Left ventricle myocardium inferior (tissue), 1 donor: ENCODE measurements at regions of chr1 and their contacts with region 1.

Region 1: GRCh38 chr1:227946624-227947385 is 927 bp downstream of the WNT9A start:
- DNase-seq: peak; percentile 78
- H3K4me3 ChIP-seq: peak overlapping the region; percentile 73
- H3K27ac ChIP-seq: peak overlapping the region; percentile 79
- H3K4me1 ChIP-seq: peaks cover 68% of the 10 kb centered on the region
- H3K27me3 ChIP-seq: peaks cover 6% of the 10 kb centered on the region
- CTCF ChIP-seq: peak; percentile 87

Region 2: GRCh38 chr1:227482023-227482299 is 464.8 kb before region 1 on chr1:
- intact Hi-C with region 1: loop called (anchors 5 kb)
- DNase-seq: no peak
- H3K4me3 ChIP-seq: no peak overlapping the region
- H3K27ac ChIP-seq: no peak overlapping the region
- H3K4me1 ChIP-seq: no peaks in the 10 kb centered on the region
- H3K27me3 ChIP-seq: peaks cover 22% of the 10 kb centered on the region
- CTCF ChIP-seq: no peak

Region 3: DNA sequence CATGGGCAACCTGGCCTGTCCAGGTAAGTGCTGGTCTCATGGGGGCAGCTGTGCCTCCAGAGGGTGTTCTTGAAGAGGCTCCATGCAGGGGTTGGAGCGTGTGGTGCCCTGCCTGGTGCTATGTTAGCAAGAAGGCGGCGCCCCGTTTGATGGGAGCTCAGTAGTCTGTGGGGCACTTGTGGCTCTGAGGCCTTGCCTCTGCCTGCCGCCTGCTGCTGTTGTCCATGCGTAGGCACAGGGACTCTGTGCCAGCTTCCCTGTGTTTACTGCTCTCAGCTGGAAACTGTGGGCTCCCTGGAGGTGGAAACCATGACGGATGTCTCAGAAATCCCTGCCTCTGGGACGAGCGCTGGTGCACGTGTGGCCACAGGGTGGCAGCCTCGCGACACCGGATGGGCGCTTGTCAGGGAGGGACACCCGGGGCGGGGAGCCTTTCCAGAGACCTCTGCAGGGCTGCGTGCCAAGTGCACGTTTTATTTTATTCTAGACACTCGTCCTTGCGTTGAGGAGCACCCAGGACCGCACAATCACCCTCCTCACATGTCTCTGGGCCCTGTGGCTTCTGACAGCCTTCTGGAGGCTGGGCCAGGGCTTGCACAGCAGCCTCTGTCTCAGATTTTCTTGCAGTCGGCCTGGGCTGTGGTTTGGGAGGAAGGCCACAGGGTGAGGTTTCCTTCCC is 184.4 kb before region 1 on chr1:
- intact Hi-C with region 1: loop called (anchors 5 kb)
- DNase-seq: peak; percentile 87
- H3K4me3 ChIP-seq: peak overlapping the region; percentile 39
- H3K27ac ChIP-seq: peak overlapping the region; percentile 69
- H3K4me1 ChIP-seq: peaks cover 67% of the 10 kb centered on the region
- H3K27me3 ChIP-seq: no peaks in the 10 kb centered on the region
- CTCF ChIP-seq: peak; percentile 93